ENCODE measurements at regions of chr17 and their contacts with region 1.

Region 1: DNA sequence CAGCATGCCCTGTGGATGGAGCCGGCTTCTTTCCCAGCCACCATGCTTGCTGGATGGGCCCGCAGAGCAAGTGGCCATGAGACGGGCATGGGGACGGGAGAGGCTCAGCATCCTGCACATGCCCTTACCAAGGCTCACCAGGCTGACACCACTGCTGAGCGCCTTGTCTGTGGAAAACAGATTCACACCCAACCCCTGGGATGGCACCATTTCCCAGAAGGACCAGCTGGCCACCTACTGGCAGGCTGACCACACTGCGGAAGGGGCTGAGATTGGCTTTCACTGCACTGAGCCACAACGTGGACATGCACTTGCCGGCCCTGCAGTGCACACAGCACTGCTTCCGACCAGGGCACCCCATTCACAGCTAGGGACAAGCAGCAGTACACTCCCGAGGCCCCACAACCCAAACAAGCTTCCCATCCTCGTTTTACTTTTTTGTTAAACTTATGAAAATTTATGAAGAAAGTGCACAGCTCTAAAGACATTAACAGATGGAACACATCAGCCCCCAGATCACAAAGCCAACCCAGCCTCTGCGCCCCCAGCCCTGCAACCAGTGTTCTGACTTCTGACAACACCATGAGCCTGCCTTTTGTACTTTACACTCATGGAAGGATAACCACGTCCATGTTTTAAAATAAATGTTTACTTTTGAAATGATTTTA is 13.9 kb upstream of the KRTAP17-1 start:
- DNase-seq: no peak
- ATAC-seq: peak; percentile 47
- H3K4me3 Mint-ChIP-seq: no peak overlapping the region
- H3K27ac Mint-ChIP-seq: no peak overlapping the region
- H3K4me1 Mint-ChIP-seq: peaks cover 6% of the 10 kb centered on the region
- H3K27me3 Mint-ChIP-seq: no peaks in the 10 kb centered on the region
- CTCF ChIP-seq: no peak

Region 2: GRCh38 chr17:40803617-40804082 is 525.8 kb before region 1 on chr17:
- CTCF ChIA-PET with region 1: no interaction called
- POLR2A ChIA-PET with region 1: no interaction called
- intact Hi-C with region 1: loop called (anchors 1 kb)
- DNase-seq: peak; percentile 54
- ATAC-seq: peak; percentile 94
- H3K4me3 Mint-ChIP-seq: no peak overlapping the region
- H3K27ac Mint-ChIP-seq: no peak overlapping the region
- H3K4me1 Mint-ChIP-seq: peaks cover 3% of the 10 kb centered on the region
- H3K27me3 Mint-ChIP-seq: peaks cover 51% of the 10 kb centered on the region
- CTCF ChIP-seq: peak; percentile 44

Region 3: DNA sequence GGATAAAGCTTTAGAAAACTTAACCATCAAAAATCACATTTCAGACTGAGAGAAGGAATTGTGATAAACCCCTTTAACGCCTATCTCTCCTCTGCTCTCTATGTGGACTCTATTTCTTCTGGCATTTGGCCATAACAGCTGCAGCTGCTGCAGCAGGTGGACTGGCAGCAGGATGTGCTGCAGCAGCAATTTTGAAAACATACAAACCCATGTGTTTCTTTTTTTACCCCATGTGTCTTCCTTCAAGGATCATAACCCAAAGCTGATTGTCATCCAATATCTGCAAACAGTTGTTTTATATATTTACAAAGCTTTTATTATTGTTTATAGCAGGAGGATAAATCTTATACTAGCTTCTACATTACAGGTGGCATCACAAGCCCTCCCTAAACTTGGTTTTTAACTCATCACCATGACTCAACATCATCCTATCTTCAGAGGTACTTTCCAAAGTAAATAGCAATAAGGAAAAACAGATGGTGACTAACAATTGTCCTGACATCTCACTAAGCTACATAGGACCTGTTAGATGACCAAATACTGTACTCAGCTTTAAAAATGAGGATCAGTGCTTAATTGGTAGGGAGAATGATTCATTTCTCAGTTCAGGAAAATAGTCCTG is 117.5 kb before region 1 on chr17:
- CTCF ChIA-PET with region 1: no interaction called
- POLR2A ChIA-PET with region 1: no interaction called
- intact Hi-C with region 1: no loop called
- DNase-seq: no peak
- ATAC-seq: no peak
- H3K4me3 Mint-ChIP-seq: no peak overlapping the region
- H3K27ac Mint-ChIP-seq: no peak overlapping the region
- H3K4me1 Mint-ChIP-seq: peaks cover 5% of the 10 kb centered on the region
- H3K27me3 Mint-ChIP-seq: peaks cover 36% of the 10 kb centered on the region
- CTCF ChIP-seq: no peak

Region 4: DNA sequence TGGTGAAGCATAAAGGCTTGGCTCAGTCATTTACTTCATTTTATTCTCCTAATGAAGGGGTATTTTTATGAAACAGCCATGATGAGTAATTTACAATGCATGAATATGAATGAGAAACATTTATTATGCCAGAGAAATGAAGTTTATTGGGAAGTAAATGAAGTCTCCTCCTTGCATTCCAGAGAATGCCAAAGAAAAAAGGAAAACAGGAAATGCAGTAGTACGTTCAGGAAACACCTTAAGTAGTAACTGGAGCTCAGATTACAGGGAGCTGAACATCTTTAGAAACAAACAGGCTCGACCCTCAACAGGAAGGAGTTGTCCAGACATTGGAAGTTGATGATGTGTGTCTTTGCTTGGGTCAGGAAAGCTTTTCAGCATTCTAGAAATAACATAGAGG is 48.1 kb after region 1 on chr17:
- CTCF ChIA-PET with region 1: no interaction called
- POLR2A ChIA-PET with region 1: no interaction called
- intact Hi-C with region 1: no loop called
- DNase-seq: no peak
- ATAC-seq: no peak
- H3K4me3 Mint-ChIP-seq: no peak overlapping the region
- H3K27ac Mint-ChIP-seq: no peak overlapping the region
- H3K4me1 Mint-ChIP-seq: no peaks in the 10 kb centered on the region
- H3K27me3 Mint-ChIP-seq: peaks cover 36% of the 10 kb centered on the region
- CTCF ChIP-seq: no peak

Region 5: DNA sequence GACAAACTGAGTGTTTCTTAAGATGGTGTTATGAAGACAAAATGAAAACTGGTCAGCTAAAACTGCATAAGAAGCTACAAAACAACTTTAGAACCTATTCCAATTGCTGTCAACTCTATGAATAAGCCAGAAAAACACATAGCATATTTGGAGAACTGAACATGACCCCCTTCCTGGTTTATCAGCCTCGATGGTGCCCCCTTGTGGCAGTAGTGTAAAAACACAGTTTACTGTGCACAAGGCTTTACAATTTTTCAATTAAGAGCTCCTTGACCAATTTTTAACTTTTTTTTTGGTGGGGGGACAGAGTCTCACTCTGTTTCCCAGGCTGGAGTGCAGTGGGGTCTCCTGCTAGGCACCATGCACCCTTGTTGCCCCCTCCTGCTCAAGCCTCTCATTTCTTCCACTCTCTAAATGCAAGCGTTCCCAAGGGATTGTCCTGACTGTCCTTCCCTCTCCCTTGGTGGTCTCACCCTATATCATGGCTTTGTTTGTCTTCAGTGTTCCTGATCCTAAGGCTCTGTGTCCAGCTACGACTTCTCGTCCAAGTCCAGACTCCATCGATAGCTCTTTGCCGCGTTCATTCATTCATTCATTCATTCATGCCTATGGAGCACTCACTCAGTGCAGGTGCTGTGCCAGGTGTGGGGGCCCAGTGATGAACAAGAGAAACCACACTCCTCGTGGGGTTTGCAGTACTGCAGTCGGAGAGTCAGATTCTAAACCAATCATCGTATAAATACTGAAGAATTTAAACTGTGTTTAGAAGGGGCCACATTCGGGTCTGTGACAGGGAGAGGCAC is 366.7 kb after region 1 on chr17:
- CTCF ChIA-PET with region 1: no interaction called
- POLR2A ChIA-PET with region 1: no interaction called
- intact Hi-C with region 1: no loop called
- DNase-seq: no peak
- ATAC-seq: peak; percentile 75
- H3K4me3 Mint-ChIP-seq: no peak overlapping the region
- H3K27ac Mint-ChIP-seq: peak overlapping the region; percentile 65
- H3K4me1 Mint-ChIP-seq: peaks cover 26% of the 10 kb centered on the region
- H3K27me3 Mint-ChIP-seq: no peaks in the 10 kb centered on the region
- CTCF ChIP-seq: peak; percentile 57

Measured in activated B cell treated with CpG ODN at 0.5 μM for 24 hours (primary cell).